ENCODE measurements at regions of chr21 and their contacts with region 1.

Region 1: DNA sequence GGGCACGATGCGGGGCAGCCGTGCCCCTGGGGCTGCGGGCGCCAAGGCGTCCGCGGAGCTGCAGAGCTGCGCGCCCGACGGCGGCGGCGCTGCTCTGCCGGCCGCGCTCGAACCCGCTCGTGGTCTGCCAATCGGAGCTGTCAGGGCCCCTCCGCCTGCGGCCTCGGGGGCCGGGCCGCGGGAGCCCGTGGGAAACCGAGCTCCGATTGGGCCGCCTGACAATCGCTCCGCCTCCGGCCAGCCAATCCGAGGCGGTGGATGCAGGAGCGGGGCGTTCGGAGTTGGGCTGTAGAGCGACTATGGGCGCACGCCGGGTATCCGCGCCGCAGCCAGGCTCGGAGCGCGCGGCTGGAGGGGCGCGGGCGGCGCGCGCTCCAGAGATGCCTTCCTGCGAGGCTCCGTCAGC is 100.5 kb upstream of the SOD1 start:
- DNase-seq: peak; percentile 92 to 94
- H3K4me3 ChIP-seq: peak overlapping the region; percentile 78 to 91 (median 88)
- H3K27ac ChIP-seq: peak overlapping the region; percentile 84
- H3K4me1 ChIP-seq: peaks cover 14 to 26% (median 24%) of the 10 kb centered on the region in 4 experiments
- H3K27me3 ChIP-seq: peaks cover 0 to 15% (median 7%) of the 10 kb centered on the region in 4 experiments; a peak in 5 of 7 replicates
- CTCF ChIP-seq: peak; percentile 53 to 62 (median 57)
- EP300 ChIP-seq: no peak
- POLR2A ChIP-seq: peak in 1 of 2 experiments; percentile 3; a peak in 2 of 3 replicates
- RAD21 ChIP-seq: peak in 1 of 2 experiments; percentile 41; a peak in 2 of 4 replicates

Region 2: DNA sequence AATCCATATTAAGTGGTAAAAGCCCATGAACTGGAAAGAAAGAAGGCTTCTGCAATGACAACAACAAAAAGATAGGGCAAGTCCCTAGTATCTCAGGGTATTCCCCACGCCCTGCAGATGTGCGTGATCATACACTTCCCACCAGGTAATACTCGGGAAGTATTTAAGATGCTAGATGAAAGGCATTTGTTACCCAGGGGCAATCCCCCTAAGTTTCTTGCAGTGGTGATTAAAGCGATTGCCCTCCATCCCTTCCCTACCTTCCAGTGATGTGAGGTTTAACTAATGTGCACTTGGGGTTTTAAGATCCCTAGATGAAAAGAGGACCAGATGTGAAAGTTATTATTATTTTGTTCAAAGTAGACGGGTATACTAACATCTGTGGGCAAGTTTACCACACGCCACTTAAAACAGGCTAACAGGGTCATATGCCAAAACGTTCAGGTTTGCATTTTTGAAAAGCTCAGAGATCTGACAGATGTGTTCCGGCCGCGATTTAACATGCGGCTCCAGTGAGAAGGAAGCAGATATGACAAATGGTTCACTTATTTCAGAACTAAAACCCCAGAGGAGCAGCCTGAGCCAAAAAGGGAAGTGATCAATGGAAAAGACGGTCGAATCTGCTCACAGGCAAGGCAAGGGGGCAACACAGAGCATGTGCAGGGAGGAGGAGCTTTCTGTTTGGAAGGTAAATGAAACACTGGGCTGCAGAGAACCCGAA is 232.3 kb before region 1 on chr21:
- CTCF ChIA-PET with region 1: no interaction called
- POLR2A ChIA-PET with region 1: no interaction called
- DNase-seq: no peak
- H3K4me3 ChIP-seq: no peak overlapping the region
- H3K27ac ChIP-seq: no peak overlapping the region
- H3K4me1 ChIP-seq: no peaks in the 10 kb centered on the region
- H3K27me3 ChIP-seq: no peaks in the 10 kb centered on the region
- CTCF ChIP-seq: no peak
- EP300 ChIP-seq: no peak
- POLR2A ChIP-seq: no peak
- RAD21 ChIP-seq: no peak

Region 3: DNA sequence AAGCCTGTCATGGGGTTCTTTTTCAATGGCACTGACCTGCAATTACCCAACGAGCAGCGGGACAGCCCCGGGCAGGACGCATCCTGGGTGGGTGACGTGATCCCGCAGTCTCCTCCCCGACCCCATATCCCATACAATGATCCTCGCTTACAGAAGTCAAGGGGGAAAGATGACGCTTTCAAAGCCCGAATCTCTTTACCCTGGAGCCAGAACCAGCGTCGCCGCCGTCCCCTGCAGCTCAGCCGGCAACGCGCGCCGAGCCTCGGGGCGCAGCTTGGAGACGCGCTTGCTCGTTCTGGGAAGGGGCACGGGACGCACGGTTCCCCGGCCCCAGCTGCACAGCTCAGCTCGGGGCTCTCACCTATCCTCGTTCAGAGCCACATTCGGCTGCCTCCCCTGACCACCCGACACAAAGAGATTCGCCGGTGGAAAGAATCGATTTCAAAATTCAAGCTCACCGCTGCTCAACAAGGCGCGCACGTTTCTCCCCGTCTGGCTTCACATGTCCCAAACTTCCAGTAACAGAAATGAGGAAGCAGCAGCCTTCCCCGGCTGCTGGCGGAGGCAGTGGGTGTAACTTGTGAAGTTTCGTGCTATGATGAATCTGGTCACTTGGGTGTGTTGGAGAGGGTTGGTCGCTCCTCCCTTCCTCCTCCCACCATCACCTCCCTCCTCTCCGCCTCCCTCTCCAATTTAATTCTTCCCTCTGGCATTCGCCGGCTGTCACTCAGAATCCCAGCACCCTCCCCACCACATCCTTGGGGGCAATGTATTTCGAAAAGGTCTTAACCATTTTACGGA is 215.1 kb before region 1 on chr21 and contains the start of gene TIAM1:
- CTCF ChIA-PET with region 1: no interaction called
- POLR2A ChIA-PET with region 1: interaction called, 10 read pairs
- DNase-seq: peak; percentile 38 to 70
- H3K4me3 ChIP-seq: peak within 1 kb of the TSS; percentile 68 to 80 (median 73)
- H3K27ac ChIP-seq: peak within 1 kb of the TSS; percentile 41; the same call in 1 of the 2 replicates
- H3K4me1 ChIP-seq: peaks cover 0 to 9% (median 3%) of the 10 kb centered on the region in 4 experiments; a peak in 3 of 7 replicates
- H3K27me3 ChIP-seq: peaks cover 0 to 2% (median 0%) of the 10 kb centered on the region in 4 experiments; a peak in 1 of 7 replicates
- CTCF ChIP-seq: no peak; a peak in 1 of 4 replicates
- EP300 ChIP-seq: no peak
- POLR2A ChIP-seq: peak; percentile 43 to 75
- RAD21 ChIP-seq: no peak; a peak in 1 of 4 replicates
- total RNA-seq, gene TIAM1: 28.4 and 30.7 TPM in 2 replicates

Region 4: DNA sequence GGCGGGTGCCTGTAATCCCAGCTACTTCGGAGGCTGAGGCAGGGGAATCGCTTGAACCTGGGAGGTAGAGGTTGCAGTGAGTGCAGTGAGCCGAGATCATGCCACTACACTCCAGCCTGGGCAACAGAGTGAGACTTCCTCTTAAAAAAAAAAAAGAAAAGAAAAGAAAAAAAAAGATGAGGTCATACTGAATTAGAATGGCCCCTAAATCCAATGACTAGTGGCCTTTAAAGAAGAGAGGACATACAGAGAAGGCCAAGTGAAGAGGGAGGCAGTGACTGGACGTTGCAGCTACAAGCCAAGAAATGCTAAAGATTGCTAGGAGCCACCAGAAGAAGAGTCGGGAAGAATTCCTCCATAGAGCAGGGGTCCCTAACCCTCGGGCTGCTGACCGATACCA is 138.0 kb before region 1 on chr21:
- CTCF ChIA-PET with region 1: no interaction called
- POLR2A ChIA-PET with region 1: no interaction called
- DNase-seq: no peak
- H3K4me3 ChIP-seq: no peak overlapping the region
- H3K27ac ChIP-seq: no peak overlapping the region
- H3K4me1 ChIP-seq: peaks cover 0 to 7% (median under 1%) of the 10 kb centered on the region in 4 experiments; a peak in 2 of 7 replicates
- H3K27me3 ChIP-seq: no peaks in the 10 kb centered on the region
- CTCF ChIP-seq: no peak
- EP300 ChIP-seq: no peak
- POLR2A ChIP-seq: no peak
- RAD21 ChIP-seq: no peak

Region 5: GRCh38 chr21:31509194-31510017 is 49.6 kb before region 1 on chr21:
- CTCF ChIA-PET with region 1: interaction called, 6 read pairs
- POLR2A ChIA-PET with region 1: interaction called, 10 read pairs
- DNase-seq: peak in 1 of 2 experiments; percentile 85
- H3K4me3 ChIP-seq: no peak overlapping the region
- H3K27ac ChIP-seq: no peak overlapping the region
- H3K4me1 ChIP-seq: peaks cover 2 to 9% (median 6%) of the 10 kb centered on the region in 4 experiments; a peak in 6 of 7 replicates
- H3K27me3 ChIP-seq: no peaks in the 10 kb centered on the region
- CTCF ChIP-seq: peak; percentile 50 to 74 (median 65)
- EP300 ChIP-seq: no peak
- POLR2A ChIP-seq: no peak
- RAD21 ChIP-seq: peak; percentile 45 to 60; a peak in 3 of 4 replicates

Region 6: GRCh38 chr21:31526040-31526439 is 32.9 kb before region 1 on chr21:
- CTCF ChIA-PET with region 1: interaction called, 4 read pairs
- POLR2A ChIA-PET with region 1: interaction called, 17 read pairs
- DNase-seq: no peak
- H3K4me3 ChIP-seq: no peak overlapping the region
- H3K27ac ChIP-seq: no peak overlapping the region
- H3K4me1 ChIP-seq: peaks cover 2 to 23% (median 9%) of the 10 kb centered on the region in 4 experiments; a peak in 6 of 7 replicates
- H3K27me3 ChIP-seq: no peaks in the 10 kb centered on the region
- CTCF ChIP-seq: no peak
- EP300 ChIP-seq: no peak
- POLR2A ChIP-seq: no peak
- RAD21 ChIP-seq: no peak

Region 7: DNA sequence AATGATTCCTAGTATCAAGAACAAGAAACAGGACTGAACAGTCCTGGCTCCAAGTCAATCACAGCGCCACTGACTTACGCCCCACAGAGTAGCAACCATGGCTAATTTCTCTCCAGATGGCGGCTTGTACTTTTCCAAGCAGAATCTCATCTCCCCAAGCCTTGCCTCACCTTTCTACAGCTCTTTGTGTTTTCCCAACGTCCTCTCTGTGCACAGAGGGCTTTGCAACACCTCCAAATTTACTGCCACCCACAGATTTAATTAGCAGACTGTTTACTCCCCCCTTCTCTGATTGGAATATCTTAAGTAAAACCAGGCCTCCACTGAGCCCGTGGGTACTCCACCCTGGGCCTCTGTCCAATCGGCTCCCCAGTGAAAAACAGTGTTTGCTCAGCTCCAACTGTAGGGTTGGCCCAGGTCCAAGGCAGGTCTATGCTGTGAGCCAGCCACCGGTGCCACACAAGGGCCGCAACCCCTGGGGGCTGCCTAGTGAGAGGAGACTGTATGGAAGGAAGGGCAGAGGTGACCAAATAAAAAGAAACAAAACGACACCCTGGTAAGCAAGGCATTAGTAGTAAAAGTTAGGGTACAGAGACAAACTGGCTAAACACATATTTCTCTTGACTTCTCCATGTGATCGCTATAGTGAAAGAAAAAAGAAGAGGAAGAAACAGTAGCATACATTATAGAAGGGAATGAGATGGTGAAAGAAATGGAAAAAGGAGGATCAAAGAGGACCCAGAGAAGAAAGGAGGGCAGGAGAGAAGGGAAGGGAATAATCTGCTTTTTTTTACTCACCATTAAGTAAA is 27.9 kb before region 1 on chr21:
- CTCF ChIA-PET with region 1: interaction called, 11 read pairs
- POLR2A ChIA-PET with region 1: interaction called, 7 read pairs
- DNase-seq: no peak
- H3K4me3 ChIP-seq: no peak overlapping the region
- H3K27ac ChIP-seq: no peak overlapping the region
- H3K4me1 ChIP-seq: peaks cover 2 to 15% (median 6%) of the 10 kb centered on the region in 4 experiments; a peak in 5 of 7 replicates
- H3K27me3 ChIP-seq: no peaks in the 10 kb centered on the region
- CTCF ChIP-seq: no peak
- EP300 ChIP-seq: no peak
- POLR2A ChIP-seq: no peak
- RAD21 ChIP-seq: no peak

Region 8: DNA sequence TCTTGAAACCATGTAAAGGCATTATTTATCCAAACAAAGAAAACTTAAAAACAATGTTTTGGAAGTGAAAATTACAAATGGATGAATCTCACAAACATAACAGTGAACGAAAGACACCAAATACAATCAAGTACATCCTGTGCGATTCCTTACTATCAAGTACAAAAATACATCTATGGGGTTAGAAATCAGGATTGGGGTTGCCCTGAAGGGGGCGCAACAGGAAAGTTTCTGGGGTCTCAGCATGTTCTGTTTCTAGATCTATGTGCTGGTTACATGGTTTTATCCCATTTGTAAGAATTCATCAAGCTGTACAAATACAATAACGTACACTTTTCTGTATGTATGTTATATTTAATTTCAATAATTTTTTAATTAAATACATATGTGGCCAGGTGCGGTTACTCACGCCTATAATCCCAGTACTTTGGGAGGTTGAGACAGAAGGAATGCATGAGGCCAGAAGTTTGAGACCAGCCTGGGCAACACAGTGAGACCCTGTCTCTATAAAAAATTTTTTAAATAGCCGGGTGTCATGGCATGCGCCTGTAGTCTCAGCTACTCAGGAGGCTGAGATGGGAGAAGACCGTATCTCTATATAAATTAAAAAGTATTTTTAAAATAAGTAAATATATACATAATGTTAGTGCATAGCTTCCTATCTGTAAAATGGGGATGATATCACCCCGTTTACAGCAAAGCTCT is 20.9 kb before region 1 on chr21:
- CTCF ChIA-PET with region 1: interaction called, 27 read pairs
- POLR2A ChIA-PET with region 1: interaction called, 97 read pairs
- DNase-seq: peak in 1 of 2 experiments; percentile 77
- H3K4me3 ChIP-seq: no peak overlapping the region
- H3K27ac ChIP-seq: no peak overlapping the region
- H3K4me1 ChIP-seq: no peaks in the 10 kb centered on the region
- H3K27me3 ChIP-seq: no peaks in the 10 kb centered on the region
- CTCF ChIP-seq: peak; percentile 17 to 78 (median 65)
- EP300 ChIP-seq: no peak
- POLR2A ChIP-seq: no peak
- RAD21 ChIP-seq: peak; percentile 67 to 75

Region 9: GRCh38 chr21:31548688-31549087 is 10.3 kb before region 1 on chr21:
- CTCF ChIA-PET with region 1: interaction called, 28 read pairs
- POLR2A ChIA-PET with region 1: interaction called, 97 read pairs
- DNase-seq: no peak
- H3K4me3 ChIP-seq: no peak overlapping the region
- H3K27ac ChIP-seq: no peak overlapping the region
- H3K4me1 ChIP-seq: peaks cover 5 to 14% (median 8%) of the 10 kb centered on the region in 4 experiments
- H3K27me3 ChIP-seq: no peaks in the 10 kb centered on the region
- CTCF ChIP-seq: peak in 2 of 3 experiments; percentile 28 to 45; a peak in 3 of 4 replicates
- EP300 ChIP-seq: no peak
- POLR2A ChIP-seq: no peak
- RAD21 ChIP-seq: peak; percentile 48 to 69